ENCODE measurements at regions of chr7 and their contacts with region 1.

Region 1: DNA sequence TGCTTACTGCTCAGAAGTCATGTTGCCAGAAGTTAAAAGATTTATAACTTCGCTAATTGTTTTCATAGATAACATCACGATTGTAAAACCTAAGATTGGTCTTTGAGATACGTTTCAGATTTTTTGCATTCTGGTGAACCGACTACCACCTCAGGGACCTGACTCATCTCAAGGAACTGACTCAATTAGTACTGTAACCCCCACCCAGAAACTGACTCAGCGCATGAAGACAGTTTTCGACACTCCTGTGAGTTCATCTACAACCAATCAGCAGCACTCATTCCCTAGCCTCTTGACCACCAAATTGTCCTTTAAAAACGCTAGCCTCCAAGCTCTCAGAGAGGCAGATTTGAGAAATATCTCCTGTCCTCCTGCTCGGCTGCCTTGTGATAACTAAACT is 72.3 kb downstream of the ELMO1 start:
- DNase-seq: no peak
- H3K4me3 Mint-ChIP-seq: peak overlapping the region; percentile 14
- H3K27ac Mint-ChIP-seq: peak overlapping the region; percentile 48
- H3K4me1 Mint-ChIP-seq: peaks cover 23% of the 10 kb centered on the region
- H3K27me3 Mint-ChIP-seq: no peaks in the 10 kb centered on the region

Region 2: DNA sequence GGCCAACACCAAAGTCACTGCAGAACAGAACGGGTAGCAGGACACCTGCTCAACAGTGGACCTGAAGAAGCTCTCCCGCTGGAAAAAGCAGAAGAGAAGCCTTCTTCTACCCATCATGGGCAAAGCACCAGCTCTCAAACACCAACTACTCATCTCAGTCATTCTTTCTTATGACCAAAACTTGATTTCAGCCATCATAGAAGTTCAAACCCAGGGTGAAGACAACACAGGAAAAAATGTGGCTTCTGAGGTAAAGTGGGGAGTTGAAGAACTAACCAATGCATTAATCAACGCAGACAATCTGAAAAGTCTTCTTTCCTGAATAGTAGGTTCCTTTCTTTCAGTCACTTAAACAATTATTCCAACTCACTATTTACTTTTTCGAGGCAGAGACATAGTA is 11.0 kb before region 1 on chr7:
- intact Hi-C with region 1: loop called (anchors 2 kb)
- DNase-seq: peak; percentile 65
- H3K4me3 Mint-ChIP-seq: peak overlapping the region; percentile 1
- H3K27ac Mint-ChIP-seq: peak overlapping the region; percentile 9
- H3K4me1 Mint-ChIP-seq: peaks cover 39% of the 10 kb centered on the region
- H3K27me3 Mint-ChIP-seq: no peaks in the 10 kb centered on the region

Region 3: GRCh38 chr7:37395618-37396259 is 19.4 kb after region 1 on chr7:
- intact Hi-C with region 1: loop called (anchors 2 kb)
- DNase-seq: no peak
- H3K4me3 Mint-ChIP-seq: peak overlapping the region; percentile 32
- H3K27ac Mint-ChIP-seq: peak overlapping the region; percentile 70
- H3K4me1 Mint-ChIP-seq: peaks cover 29% of the 10 kb centered on the region
- H3K27me3 Mint-ChIP-seq: no peaks in the 10 kb centered on the region

Measured in activated CD4-positive, alpha-beta T cell treated with anti-CD3 and anti-CD28 coated beads, Interleukin-2, amount 10 ng/mL, durations not matched to agents 24 days and 14 days (primary cell).